Gastrocnemius medialis (tissue), 4 donors: ENCODE measurements at regions of chr9 and their contacts with region 1.

Region 1: DNA sequence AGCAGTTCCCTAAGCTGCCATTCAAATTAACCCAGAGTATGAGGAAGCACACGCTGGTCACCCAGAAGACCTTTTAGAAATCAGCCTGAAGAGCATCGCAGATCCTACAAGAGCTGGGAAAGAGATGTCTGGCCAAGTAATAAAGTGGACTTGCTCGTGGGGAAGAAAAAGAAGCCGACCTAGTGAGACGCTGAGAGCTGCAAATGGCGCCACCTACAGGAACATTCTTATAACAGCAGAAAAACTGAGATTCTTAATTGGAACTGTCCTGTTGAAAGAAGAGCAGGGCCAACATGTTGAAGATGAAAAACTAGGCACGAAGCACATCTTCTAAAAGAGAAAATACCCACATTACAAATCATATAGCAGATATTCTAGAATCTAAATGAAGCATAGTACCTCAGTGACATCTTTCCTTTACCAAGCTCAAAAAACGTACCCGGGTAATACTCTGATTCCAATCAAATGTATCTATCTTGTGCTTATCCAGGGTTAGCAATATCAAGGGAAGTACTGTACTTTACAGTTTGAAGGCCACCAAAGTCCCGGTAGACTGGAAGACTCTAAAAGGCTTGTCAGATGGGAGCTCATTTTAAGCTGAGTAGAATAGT is 3.9 kb upstream of the GNAQ start:
- DNase-seq: peak; percentile 23 to 38
- ATAC-seq: peak; percentile 15 to 22
- H3K4me3 ChIP-seq: no peak overlapping the region
- H3K27ac ChIP-seq: peak overlapping the region; percentile 1 to 53 (median 36)
- H3K4me1 ChIP-seq: peaks cover 3 to 9% of the 10 kb centered on the region in 2 donors
- H3K27me3 ChIP-seq: no peaks in the 10 kb centered on the region
- CTCF ChIP-seq: peak; percentile 72 to 89 (median 74)
- POLR2A ChIP-seq: no peak

Region 2: GRCh38 chr9:77440057-77440456 is 595.4 kb before region 1 on chr9:
- in situ Hi-C with region 1: loop called in 3 of 4 experiments (anchors 10 to 25 kb)
- intact Hi-C with region 1: no loop called
- DNase-seq: no peak
- ATAC-seq: no peak
- H3K4me3 ChIP-seq: no peak overlapping the region
- H3K27ac ChIP-seq: no peak overlapping the region
- H3K4me1 ChIP-seq: no peaks in the 10 kb centered on the region
- H3K27me3 ChIP-seq: no peaks in the 10 kb centered on the region
- CTCF ChIP-seq: no peak
- POLR2A ChIP-seq: no peak

Region 3: GRCh38 chr9:77731930-77732329 is 303.6 kb before region 1 on chr9:
- in situ Hi-C with region 1: loop called in 1 of 4 experiments (anchors 25 kb)
- intact Hi-C with region 1: no loop called
- DNase-seq: peak; percentile 29 to 37
- ATAC-seq: peak; percentile 75 to 94
- H3K4me3 ChIP-seq: no peak overlapping the region
- H3K27ac ChIP-seq: peak overlapping the region; percentile 33 to 75 (median 43)
- H3K4me1 ChIP-seq: peaks cover 28 to 32% of the 10 kb centered on the region in 2 donors
- H3K27me3 ChIP-seq: no peaks in the 10 kb centered on the region
- CTCF ChIP-seq: no peak
- POLR2A ChIP-seq: peak in 1 of 2 donors; percentile 32

Region 4: DNA sequence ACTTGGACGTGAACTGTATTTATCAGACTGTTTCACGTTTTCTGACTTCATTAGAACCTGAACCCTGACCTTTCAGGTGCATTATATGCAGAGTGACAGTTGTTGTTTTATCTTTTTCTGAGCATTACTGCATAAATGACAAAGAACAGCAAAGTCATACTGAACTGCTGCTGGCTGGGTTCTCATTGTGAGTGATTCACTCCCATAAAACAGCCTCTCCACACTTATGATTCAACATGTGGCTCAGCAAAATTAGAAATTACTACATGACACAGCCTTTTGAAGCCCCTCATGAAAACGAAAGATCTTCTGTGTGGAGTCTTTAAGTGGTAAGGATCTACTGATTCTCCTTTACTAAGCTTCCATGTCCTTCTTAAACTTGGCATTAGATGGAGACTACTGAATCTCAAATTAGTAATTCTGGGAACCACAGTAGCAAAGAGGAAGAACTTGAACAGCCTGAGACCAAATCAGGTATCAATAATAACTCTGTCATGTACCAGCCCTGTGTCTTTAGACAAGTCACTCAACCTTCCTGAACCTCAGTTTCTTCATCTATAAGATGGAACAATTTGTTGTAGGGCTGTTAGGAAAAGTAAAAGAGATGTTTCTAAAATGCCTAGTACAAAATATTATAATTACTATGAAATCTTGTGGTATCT is 215.1 kb before region 1 on chr9:
- in situ Hi-C with region 1: loop called in 2 of 4 experiments (anchors 10 to 25 kb)
- intact Hi-C with region 1: no loop called
- DNase-seq: no peak
- ATAC-seq: peak in 1 of 2 donors; percentile 49
- H3K4me3 ChIP-seq: no peak overlapping the region
- H3K27ac ChIP-seq: peak overlapping the region in 1 of 4 donors; percentile 1
- H3K4me1 ChIP-seq: peaks cover 3 to 16% of the 10 kb centered on the region in 2 donors
- H3K27me3 ChIP-seq: no peaks in the 10 kb centered on the region
- CTCF ChIP-seq: no peak
- POLR2A ChIP-seq: no peak

Region 5: DNA sequence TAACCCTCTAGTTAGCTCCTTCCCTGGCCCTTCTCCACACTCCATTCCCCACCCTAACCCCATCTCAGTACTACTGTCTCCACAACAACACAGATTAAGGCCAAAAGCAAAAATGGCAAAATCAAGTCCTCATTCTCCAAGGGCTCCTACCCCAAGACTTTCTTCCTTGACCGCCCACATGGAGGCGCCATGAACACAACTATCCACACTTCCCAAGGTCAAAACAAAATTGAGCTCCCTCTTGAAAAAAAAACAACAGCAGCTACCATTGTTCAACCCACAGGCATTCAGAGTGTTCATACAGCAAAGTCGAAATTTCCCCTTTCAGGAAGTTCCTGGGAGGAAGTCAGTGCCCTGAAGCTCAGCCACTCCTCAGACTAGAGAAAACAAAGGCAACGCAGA is 58.3 kb before region 1 on chr9:
- in situ Hi-C with region 1: loop called in 1 of 4 experiments (anchors 10 kb)
- intact Hi-C with region 1: loop called (anchors 2 kb)
- DNase-seq: peak; percentile 5 to 34
- ATAC-seq: peak; percentile 61 to 73
- H3K4me3 ChIP-seq: no peak overlapping the region
- H3K27ac ChIP-seq: peak overlapping the region in 3 of 4 donors; percentile 12 to 30 (median 21)
- H3K4me1 ChIP-seq: peaks cover 26 to 54% of the 10 kb centered on the region in 2 donors
- H3K27me3 ChIP-seq: no peaks in the 10 kb centered on the region
- CTCF ChIP-seq: peak in 3 of 5 experiments; percentile 35 to 53 (median 35)
- POLR2A ChIP-seq: no peak

Region 6: DNA sequence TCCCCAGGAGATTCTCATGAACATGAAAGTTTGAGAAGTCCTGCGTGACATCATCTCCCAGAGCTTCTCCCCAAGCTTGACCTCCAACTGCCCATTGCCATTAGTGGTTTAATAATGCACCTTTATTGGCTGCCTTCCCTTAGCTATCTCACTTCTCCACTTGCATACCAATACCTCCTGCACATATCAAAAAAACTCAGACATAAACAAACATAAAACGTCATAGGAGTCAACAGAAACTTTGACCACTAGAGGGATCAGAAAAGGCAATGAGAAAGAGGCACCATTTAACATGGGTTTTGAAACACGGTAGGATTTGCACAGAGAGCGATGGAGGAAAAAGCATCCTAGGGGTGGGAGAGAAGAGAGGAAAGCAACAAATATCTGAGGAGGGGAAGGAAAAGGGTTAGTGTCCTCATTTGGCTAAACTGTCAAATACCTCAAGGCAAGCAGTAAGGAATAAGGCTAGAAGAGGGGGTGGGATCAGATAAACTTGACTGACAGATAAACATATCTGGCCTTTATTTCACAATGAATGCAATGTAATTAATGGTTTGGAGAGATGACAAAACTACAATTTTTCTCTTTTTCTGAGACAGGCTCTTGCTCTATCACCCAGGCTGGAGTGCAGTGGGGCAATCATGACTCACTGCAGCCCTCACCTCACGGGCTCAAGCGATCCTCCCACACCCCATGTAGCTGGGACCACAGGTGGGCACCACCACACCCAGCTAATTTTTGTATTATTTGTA is 30.8 kb before region 1 on chr9:
- in situ Hi-C with region 1: no loop called
- intact Hi-C with region 1: no loop called
- DNase-seq: no peak
- ATAC-seq: no peak
- H3K4me3 ChIP-seq: no peak overlapping the region
- H3K27ac ChIP-seq: no peak overlapping the region
- H3K4me1 ChIP-seq: peaks cover 7 to 23% of the 10 kb centered on the region in 2 donors
- H3K27me3 ChIP-seq: no peaks in the 10 kb centered on the region
- CTCF ChIP-seq: peak in 1 of 5 experiments; percentile 25
- POLR2A ChIP-seq: no peak

Region 7: DNA sequence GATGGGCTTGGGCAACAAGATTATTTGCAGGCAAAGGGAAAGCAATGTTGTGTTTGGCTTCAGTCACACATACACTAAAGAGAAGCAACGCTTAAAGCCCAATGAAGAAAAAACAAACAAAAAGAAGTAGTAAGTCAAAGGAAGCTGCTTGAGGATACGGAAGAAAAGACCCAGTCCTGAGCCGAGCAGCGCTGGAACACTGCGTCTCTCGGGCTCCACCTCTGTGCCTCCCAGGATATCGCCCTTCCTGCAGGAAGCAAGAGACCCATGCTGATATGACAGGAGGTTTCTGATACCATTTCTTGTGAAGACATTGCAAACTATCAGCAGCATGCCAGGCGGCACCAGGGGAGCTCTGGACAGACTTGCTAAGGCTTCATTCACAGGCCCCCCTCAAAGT is 13.8 kb before region 1 on chr9:
- in situ Hi-C with region 1: no loop called
- intact Hi-C with region 1: no loop called
- DNase-seq: no peak
- ATAC-seq: no peak
- H3K4me3 ChIP-seq: no peak overlapping the region
- H3K27ac ChIP-seq: peak overlapping the region in 2 of 4 donors; percentile 21 to 29
- H3K4me1 ChIP-seq: peaks cover 19 to 48% of the 10 kb centered on the region in 2 donors
- H3K27me3 ChIP-seq: no peaks in the 10 kb centered on the region
- CTCF ChIP-seq: no peak
- POLR2A ChIP-seq: no peak